Activated CD8-positive, alpha-beta T cell treated with anti-CD3 and anti-CD28 coated beads, Interleukin-2, amount 10 ng/mL, durations not matched to agents 7 days and 5 days (primary cell): ENCODE measurements at regions of chr2 and their contacts with region 1.

Region 1: GRCh38 chr2:98822301-98823164 is 91.6 kb upstream of the MGAT4A start:
- DNase-seq: peak; percentile 69
- ATAC-seq: peak; percentile 93
- H3K4me3 Mint-ChIP-seq: peak overlapping the region; percentile 57
- H3K27ac Mint-ChIP-seq: no peak overlapping the region
- H3K4me1 Mint-ChIP-seq: peaks cover 17% of the 10 kb centered on the region
- H3K27me3 Mint-ChIP-seq: peaks cover 3% of the 10 kb centered on the region

Region 2: DNA sequence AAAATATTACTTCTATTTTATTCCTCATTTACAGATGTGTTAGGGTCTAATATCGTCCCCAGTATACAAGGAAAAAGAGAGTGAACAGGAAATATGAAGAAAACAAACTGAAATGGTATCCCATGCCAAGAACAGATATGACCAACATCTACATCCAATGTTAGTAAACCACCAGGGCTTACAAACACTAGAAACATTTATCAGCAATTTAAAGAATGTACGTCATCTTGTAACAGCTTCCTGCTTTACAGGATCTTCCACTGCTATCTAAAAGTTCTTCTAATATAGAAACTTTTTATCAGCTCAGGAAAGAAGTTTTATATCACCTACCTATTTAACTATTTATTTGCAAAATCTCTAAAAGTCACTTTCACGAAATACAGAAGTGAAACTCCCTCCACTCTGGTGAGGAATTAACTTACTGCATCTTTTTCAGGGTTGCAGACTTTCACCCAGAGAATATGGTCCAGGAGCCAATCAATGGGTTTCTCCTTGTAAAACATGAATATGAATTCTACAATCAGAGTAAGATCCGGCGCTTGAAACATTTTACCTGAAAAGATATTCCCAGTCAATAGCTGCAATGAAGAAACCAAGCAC is 178.9 kb before region 1 on chr2:
- CTCF ChIA-PET with region 1: interaction called, 12 read pairs
- POLR2A ChIA-PET with region 1: no interaction called
- DNase-seq: no peak
- ATAC-seq: no peak
- H3K4me3 Mint-ChIP-seq: no peak overlapping the region
- H3K27ac Mint-ChIP-seq: no peak overlapping the region
- H3K4me1 Mint-ChIP-seq: peaks cover 2% of the 10 kb centered on the region
- H3K27me3 Mint-ChIP-seq: no peaks in the 10 kb centered on the region

Region 3: GRCh38 chr2:98805412-98806171 is 16.9 kb before region 1 on chr2:
- CTCF ChIA-PET with region 1: interaction called, 18 read pairs
- POLR2A ChIA-PET with region 1: interaction called, 3 read pairs
- DNase-seq: no peak
- ATAC-seq: no peak
- H3K4me3 Mint-ChIP-seq: no peak overlapping the region
- H3K27ac Mint-ChIP-seq: no peak overlapping the region
- H3K4me1 Mint-ChIP-seq: peaks cover 24% of the 10 kb centered on the region
- H3K27me3 Mint-ChIP-seq: peaks cover 10% of the 10 kb centered on the region

Region 4: GRCh38 chr2:98846041-98846440 is 23.5 kb after region 1 on chr2:
- CTCF ChIA-PET with region 1: no interaction called
- POLR2A ChIA-PET with region 1: no interaction called
- DNase-seq: no peak
- ATAC-seq: no peak
- H3K4me3 Mint-ChIP-seq: no peak overlapping the region
- H3K27ac Mint-ChIP-seq: no peak overlapping the region
- H3K4me1 Mint-ChIP-seq: no peaks in the 10 kb centered on the region
- H3K27me3 Mint-ChIP-seq: peaks cover 32% of the 10 kb centered on the region